ENCODE measurements at regions of chr17 and their contacts with region 1.

Region 1: GRCh38 chr17:42312285-42313130 is 24.2 kb downstream of the STAT5A start:
- DNase-seq: peak; percentile 88
- ATAC-seq: peak; percentile 86
- H3K4me3 ChIP-seq: peak overlapping the region; percentile 10
- H3K27ac ChIP-seq: peak overlapping the region; percentile 71
- H3K4me1 ChIP-seq: peaks cover 44% of the 10 kb centered on the region
- H3K27me3 ChIP-seq: no peaks in the 10 kb centered on the region
- CTCF ChIP-seq: peak; percentile 67

Region 2: DNA sequence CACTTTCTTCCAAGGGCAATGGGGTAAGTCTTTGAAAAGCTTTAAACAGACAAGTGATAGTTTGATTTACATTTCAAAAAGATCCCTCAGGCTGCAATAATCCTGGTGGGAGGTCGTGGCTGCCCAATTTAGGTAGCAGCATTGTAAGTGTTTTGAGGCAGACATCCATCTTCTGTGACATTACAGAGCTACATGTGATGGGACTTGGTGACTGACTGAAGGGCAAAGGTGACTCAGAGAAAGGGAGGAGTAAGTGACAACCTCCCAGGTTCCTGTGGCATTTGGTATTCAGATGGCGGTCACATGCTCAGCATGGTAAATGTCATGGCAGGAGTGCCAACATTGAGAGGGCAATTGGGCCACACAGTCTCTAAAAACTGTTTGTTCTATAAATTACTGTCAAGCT is 49.3 kb after region 1 on chr17:
- intact Hi-C with region 1: no loop called
- DNase-seq: no peak
- ATAC-seq: peak; percentile 31 to 50
- H3K4me3 ChIP-seq: no peak overlapping the region
- H3K27ac ChIP-seq: no peak overlapping the region
- H3K4me1 ChIP-seq: peaks cover 90% of the 10 kb centered on the region
- H3K27me3 ChIP-seq: no peaks in the 10 kb centered on the region
- CTCF ChIP-seq: no peak

Region 3: GRCh38 chr17:42438600-42439567 is 126.4 kb after region 1 on chr17:
- intact Hi-C with region 1: no loop called
- DNase-seq: peak; percentile 62
- ATAC-seq: no peak
- H3K4me3 ChIP-seq: no peak overlapping the region
- H3K27ac ChIP-seq: no peak overlapping the region
- H3K4me1 ChIP-seq: peaks cover 18% of the 10 kb centered on the region
- H3K27me3 ChIP-seq: no peaks in the 10 kb centered on the region
- CTCF ChIP-seq: peak; percentile 50

Region 4: GRCh38 chr17:42517516-42517915 is 205.0 kb after region 1 on chr17:
- intact Hi-C with region 1: loop called (anchors 10 kb)
- DNase-seq: peak; percentile 91
- ATAC-seq: peak; percentile 83 to 84
- H3K4me3 ChIP-seq: no peak overlapping the region
- H3K27ac ChIP-seq: peak overlapping the region; percentile 90
- H3K4me1 ChIP-seq: peaks cover 74% of the 10 kb centered on the region
- H3K27me3 ChIP-seq: no peaks in the 10 kb centered on the region
- CTCF ChIP-seq: peak; percentile 96